Transverse colon (tissue), 4 donors: ENCODE measurements at regions of chr10 and their contacts with region 1.

Region 1: GRCh38 chr10:122446668-122447423 is 7.6 kb upstream of the ARMS2 start:
- DNase-seq: no peak
- H3K4me3 ChIP-seq: no peak overlapping the region
- H3K27ac ChIP-seq: no peak overlapping the region
- H3K4me1 ChIP-seq: no peaks in the 10 kb centered on the region
- H3K27me3 ChIP-seq: no peaks in the 10 kb centered on the region
- CTCF ChIP-seq: no peak
- EP300 ChIP-seq: no peak
- POLR2A ChIP-seq: no peak

Region 2: DNA sequence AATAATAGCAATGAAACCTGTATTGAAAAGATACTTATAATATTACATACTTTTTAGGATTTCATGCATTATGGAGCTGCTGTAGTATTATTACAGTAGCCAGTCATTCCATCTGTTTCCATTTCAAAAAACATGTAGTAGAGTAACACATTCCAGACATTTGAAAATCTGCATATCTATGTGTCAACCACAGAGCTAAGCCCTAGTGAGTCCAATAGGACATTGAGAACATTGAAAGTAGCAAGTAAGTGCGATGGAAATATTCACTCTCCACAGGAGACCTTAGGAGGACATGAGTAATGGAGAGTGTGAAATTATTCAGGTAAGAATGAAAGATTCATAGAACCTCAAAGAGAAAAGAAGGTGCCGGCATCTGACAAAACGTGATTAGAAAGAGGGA is 487.2 kb before region 1 on chr10:
- in situ Hi-C with region 1: no loop called
- intact Hi-C with region 1: no loop called
- DNase-seq: no peak
- H3K4me3 ChIP-seq: no peak overlapping the region
- H3K27ac ChIP-seq: no peak overlapping the region
- H3K4me1 ChIP-seq: no peaks in the 10 kb centered on the region
- H3K27me3 ChIP-seq: no peaks in the 10 kb centered on the region
- CTCF ChIP-seq: no peak
- EP300 ChIP-seq: no peak
- POLR2A ChIP-seq: no peak

Region 3: DNA sequence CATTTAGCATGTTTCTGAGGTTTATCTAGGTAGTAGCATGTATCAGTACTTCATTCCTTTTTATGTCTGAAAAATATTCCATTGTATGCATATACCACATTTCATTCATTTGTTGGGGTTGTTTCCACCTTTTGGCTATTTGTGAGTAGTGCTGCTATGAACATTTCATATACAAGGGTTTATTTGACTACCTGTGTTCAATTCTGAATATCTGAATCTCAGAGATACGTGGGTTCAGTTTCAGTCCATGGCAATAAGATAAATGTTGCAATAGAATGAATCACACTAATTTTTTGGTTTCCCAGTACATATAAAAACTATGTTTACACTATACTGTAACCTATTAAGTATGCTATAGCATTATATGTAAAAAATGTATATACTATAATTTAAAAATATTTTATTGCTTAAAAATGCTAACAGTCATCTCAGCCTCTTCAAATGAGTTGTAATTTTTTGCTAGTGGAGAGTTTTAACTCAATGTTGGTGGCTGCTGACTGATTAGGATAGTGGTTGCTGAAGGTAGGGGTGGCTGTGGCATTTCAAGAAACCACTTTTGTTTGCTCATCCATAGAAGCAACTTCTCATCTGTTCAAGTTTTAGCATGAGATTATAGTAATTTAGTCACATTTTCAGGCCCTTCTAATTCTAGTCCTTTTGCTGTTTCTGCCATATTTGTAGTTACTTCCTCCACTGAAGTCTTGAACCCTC is 58.4 kb before region 1 on chr10:
- in situ Hi-C with region 1: no loop called
- intact Hi-C with region 1: no loop called
- DNase-seq: no peak
- H3K4me3 ChIP-seq: no peak overlapping the region
- H3K27ac ChIP-seq: no peak overlapping the region
- H3K4me1 ChIP-seq: peaks cover 5 to 42% (median 22%) of the 10 kb centered on the region in 4 donors
- H3K27me3 ChIP-seq: no peaks in the 10 kb centered on the region
- CTCF ChIP-seq: no peak
- EP300 ChIP-seq: no peak
- POLR2A ChIP-seq: no peak

Region 4: GRCh38 chr10:122421054-122421625 is 25.7 kb before region 1 on chr10:
- in situ Hi-C with region 1: no loop called
- intact Hi-C with region 1: loop called (anchors 1 kb)
- DNase-seq: no peak
- H3K4me3 ChIP-seq: no peak overlapping the region
- H3K27ac ChIP-seq: no peak overlapping the region
- H3K4me1 ChIP-seq: peaks cover 0 to 33% (median 7%) of the 10 kb centered on the region in 4 donors
- H3K27me3 ChIP-seq: no peaks in the 10 kb centered on the region
- CTCF ChIP-seq: no peak
- EP300 ChIP-seq: no peak
- POLR2A ChIP-seq: no peak

Region 5: GRCh38 chr10:122571892-122572291 is 125.0 kb after region 1 on chr10:
- in situ Hi-C with region 1: loop called in 1 of 4 experiments (anchors 10 kb)
- intact Hi-C with region 1: loop called (anchors 5 kb)
- DNase-seq: no peak
- H3K4me3 ChIP-seq: no peak overlapping the region
- H3K27ac ChIP-seq: no peak overlapping the region
- H3K4me1 ChIP-seq: no peaks in the 10 kb centered on the region
- H3K27me3 ChIP-seq: no peaks in the 10 kb centered on the region
- CTCF ChIP-seq: no peak
- EP300 ChIP-seq: no peak
- POLR2A ChIP-seq: no peak